Endothelial cell of umbilical vein (primary cell): ENCODE measurements at regions of chr22 and their contacts with region 1.

Region 1: GRCh38 chr22:42877597-42878340 is 20.7 kb upstream of the ARFGAP3 start:
- DNase-seq: no peak
- H3K4me3 ChIP-seq: no peak overlapping the region
- H3K27ac ChIP-seq: no peak overlapping the region
- H3K4me1 ChIP-seq: no peaks in the 10 kb centered on the region
- H3K27me3 ChIP-seq: no peaks in the 10 kb centered on the region
- CTCF ChIP-seq: no peak
- POLR2A ChIP-seq: no peak

Region 2: GRCh38 chr22:42711895-42712837 is 165.6 kb before region 1 on chr22:
- CTCF ChIA-PET with region 1: no interaction called
- POLR2A ChIA-PET with region 1: no interaction called
- dilution Hi-C with region 1: no loop called
- intact Hi-C with region 1: no loop called
- DNase-seq: no peak
- H3K4me3 ChIP-seq: no peak overlapping the region
- H3K27ac ChIP-seq: no peak overlapping the region
- H3K4me1 ChIP-seq: no peaks in the 10 kb centered on the region
- H3K27me3 ChIP-seq: no peaks in the 10 kb centered on the region
- CTCF ChIP-seq: no peak
- POLR2A ChIP-seq: no peak

Region 3: GRCh38 chr22:42841444-42841843 is 36.3 kb before region 1 on chr22:
- CTCF ChIA-PET with region 1: no interaction called
- POLR2A ChIA-PET with region 1: no interaction called
- dilution Hi-C with region 1: no loop called
- intact Hi-C with region 1: no loop called
- DNase-seq: no peak
- H3K4me3 ChIP-seq: no peak overlapping the region
- H3K27ac ChIP-seq: no peak overlapping the region
- H3K4me1 ChIP-seq: peaks cover 22% of the 10 kb centered on the region
- H3K27me3 ChIP-seq: no peaks in the 10 kb centered on the region
- CTCF ChIP-seq: no peak
- POLR2A ChIP-seq: no peak

Region 4: GRCh38 chr22:42863349-42863961 is 14.3 kb before region 1 on chr22:
- CTCF ChIA-PET with region 1: interaction called, 12 read pairs
- POLR2A ChIA-PET with region 1: no interaction called
- dilution Hi-C with region 1: no loop called
- intact Hi-C with region 1: no loop called
- DNase-seq: peak; percentile 19
- H3K4me3 ChIP-seq: no peak overlapping the region
- H3K27ac ChIP-seq: no peak overlapping the region
- H3K4me1 ChIP-seq: no peaks in the 10 kb centered on the region
- H3K27me3 ChIP-seq: no peaks in the 10 kb centered on the region
- CTCF ChIP-seq: no peak
- POLR2A ChIP-seq: no peak